ENCODE measurements at regions of chr3 and their contacts with region 1.

Region 1: DNA sequence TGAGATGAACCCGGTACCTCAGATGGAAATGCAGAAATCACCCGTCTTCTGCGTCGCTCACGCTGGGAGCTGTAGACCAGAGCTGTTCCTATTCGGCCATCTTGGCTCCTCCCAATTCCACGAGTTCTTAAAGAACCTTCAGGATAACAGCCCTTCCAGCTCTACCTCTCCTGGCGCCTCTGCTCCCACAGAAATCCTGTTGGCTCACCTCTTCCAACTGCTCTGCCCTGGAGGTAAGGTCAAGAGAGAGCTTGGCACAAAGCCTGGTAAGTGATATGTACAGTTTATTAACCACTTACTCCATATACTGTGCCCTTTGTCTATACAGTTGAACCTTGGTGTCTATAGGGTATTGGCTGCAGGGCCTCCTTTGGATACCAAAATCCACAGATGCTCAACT is 17.8 kb upstream of the FGF12 start:
- DNase-seq: no peak
- H3K4me3 ChIP-seq: no peak overlapping the region
- H3K27ac ChIP-seq: no peak overlapping the region
- H3K4me1 ChIP-seq: no peaks in the 10 kb centered on the region
- H3K27me3 ChIP-seq: no peaks in the 10 kb centered on the region
- CTCF ChIP-seq: no peak

Region 2: DNA sequence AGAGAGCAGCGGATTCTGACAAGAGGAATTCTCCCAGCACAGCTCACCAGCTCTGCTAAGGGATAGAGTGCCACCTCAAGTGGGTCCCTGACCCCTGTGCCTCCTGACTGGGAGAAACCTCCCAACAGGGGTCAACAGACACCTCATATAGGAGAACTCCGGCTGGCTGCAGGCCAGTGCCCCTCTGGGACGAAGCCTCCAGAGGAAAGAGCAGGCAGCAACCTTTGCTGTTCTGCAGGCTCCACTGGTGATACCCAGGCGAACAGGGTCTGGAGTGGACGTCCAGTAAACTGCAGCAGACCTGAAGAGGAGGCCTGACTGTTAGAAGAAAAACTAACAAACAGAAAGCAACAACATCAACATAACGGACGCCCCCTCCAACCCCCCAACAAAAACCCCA is 13.5 kb after region 1 on chr3:
- CTCF ChIA-PET with region 1: no interaction called
- POLR2A ChIA-PET with region 1: interaction called, 10 read pairs
- intact Hi-C with region 1: no loop called
- DNase-seq: no peak
- H3K4me3 ChIP-seq: no peak overlapping the region
- H3K27ac ChIP-seq: no peak overlapping the region
- H3K4me1 ChIP-seq: no peaks in the 10 kb centered on the region
- H3K27me3 ChIP-seq: no peaks in the 10 kb centered on the region
- CTCF ChIP-seq: no peak

Measured in A673 (cell line).